ENCODE measurements at regions of chr9 and their contacts with region 1.

Region 1: DNA sequence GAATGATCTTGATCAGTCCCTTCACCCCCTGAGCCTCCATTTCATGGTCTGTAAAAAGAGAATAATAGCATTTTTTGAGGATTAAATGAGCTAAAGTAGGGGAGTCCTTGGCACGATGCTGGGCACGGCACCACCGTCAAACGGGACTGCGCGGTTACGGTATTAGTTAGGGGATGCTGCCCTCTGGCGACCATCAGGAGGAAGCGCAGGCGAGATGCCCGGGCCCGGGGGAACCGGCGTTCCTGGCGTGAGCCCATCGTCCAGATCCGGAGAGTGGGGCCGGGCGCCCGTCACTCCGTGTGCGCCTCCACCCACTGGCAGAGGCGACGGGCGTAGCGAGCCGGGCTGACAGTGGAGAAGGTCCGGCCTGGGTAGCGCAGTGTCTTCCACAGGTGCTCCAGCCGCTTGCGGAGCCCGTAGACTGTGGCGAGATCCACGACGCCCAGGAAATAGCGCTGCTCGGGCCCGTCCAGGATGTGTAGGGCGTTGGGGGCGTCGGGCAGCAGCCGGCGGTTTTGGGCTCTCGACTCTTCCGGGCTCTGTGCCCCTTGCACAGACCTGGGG is 4.8 kb upstream of the ST6GALNAC4 start:
- DNase-seq: peak; percentile 76 to 81 (median 77)
- ATAC-seq: peak; percentile 44 to 54 (median 52)
- H3K4me3 ChIP-seq: peak overlapping the region in 1 of 3 donors; percentile 21
- H3K27ac ChIP-seq: no peak overlapping the region
- H3K4me1 ChIP-seq: peaks cover 0 to 29% (median 3%) of the 10 kb centered on the region in 4 donors
- H3K27me3 ChIP-seq: no peaks in the 10 kb centered on the region
- CTCF ChIP-seq: peak; percentile 96 to 98 (median 97)
- POLR2A ChIP-seq: no peak

Region 2: GRCh38 chr9:127586537-127586936 is 335.1 kb before region 1 on chr9:
- intact Hi-C with region 1: loop called (anchors 10 kb)
- DNase-seq: peak; percentile 73 to 82 (median 75)
- ATAC-seq: peak; percentile 91 to 95 (median 94)
- H3K4me3 ChIP-seq: no peak overlapping the region
- H3K27ac ChIP-seq: no peak overlapping the region
- H3K4me1 ChIP-seq: peaks cover 0 to 4% (median under 1%) of the 10 kb centered on the region in 4 donors
- H3K27me3 ChIP-seq: no peaks in the 10 kb centered on the region
- CTCF ChIP-seq: peak; percentile 81 to 89 (median 84)
- POLR2A ChIP-seq: no peak